Activated CD4-positive, alpha-beta memory T cell treated with anti-CD3 and anti-CD28 coated beads for 36 hours (primary cell): ENCODE measurements at regions of chr6 and their contacts with region 1.

Region 1: DNA sequence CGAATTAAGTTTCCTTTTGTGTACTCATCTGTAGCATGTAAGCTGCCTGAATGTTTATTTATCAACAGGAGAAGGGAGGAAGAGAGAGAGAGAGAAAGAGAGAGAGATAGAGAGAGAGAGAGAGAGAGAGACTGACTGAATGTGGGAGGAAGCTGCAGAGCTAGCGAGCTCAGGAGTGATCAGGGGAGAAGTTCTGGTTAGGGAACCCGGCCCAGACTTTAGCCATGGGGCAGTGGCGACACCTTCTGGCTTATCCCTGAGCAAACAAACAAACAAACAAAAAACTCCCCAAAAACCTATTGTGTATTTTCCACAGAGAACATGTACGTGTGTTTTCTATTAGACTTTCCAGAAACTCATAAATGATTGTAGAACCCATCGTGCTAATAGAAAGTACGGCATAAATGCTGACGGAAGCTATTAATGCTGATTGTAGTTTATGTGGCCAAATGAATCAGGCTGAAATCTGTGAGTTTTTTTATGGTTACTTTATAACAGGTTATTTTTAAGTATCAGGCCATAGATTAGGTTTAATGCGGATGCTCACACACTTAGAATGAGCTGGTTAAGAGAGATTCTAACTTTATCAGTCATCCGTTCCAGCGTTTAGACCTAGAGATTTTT is 92.8 kb downstream of the CLIC5 start:
- DNase-seq: peak; percentile 83
- H3K4me3 Mint-ChIP-seq: peak overlapping the region; percentile 67
- H3K27ac Mint-ChIP-seq: peak overlapping the region; percentile 97
- H3K4me1 Mint-ChIP-seq: peaks cover 52% of the 10 kb centered on the region
- H3K27me3 Mint-ChIP-seq: no peaks in the 10 kb centered on the region

Region 2: DNA sequence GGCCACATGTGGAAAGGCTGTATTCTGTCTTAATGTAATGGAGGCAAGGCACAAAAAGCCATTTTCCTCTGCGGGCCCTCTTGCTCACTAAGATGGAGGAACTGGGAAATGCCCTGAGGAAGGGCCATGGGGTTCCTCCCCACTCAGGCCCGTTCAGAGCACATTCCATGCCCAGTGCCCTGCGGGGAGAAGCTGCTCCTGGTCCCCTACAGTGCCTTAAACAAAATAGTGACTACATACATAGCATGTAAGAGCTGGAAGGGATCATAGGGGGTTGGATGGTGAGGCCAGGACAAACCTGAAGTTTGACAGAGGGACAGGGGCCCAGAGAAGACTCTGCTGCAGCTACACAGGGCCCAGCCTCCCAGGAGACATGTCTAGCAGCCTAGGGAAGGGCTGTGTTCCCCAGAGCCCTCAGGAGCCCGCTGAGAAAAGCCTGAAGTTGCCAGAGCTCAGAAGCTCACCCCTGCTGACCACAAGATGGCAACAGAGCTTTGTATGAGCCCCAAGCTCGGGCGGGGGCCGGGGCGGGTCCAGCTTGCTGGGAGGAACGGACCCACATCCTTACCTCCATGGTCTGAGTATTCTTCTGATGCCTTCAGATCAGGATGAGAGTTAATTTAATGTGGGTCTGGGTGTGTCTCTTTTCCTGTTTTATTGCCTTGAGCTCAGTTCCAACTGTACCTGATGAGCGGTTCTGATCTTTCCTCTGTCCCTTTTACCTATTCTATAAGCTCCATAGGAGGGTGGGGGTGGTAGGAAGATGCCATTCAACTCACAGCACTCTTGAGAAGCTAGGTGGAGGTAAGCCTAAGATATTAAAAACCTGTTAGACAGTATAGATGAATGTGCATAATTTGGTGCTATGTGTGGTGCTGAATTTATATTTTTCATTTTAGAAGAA is 1292.5 kb before region 1 on chr6:
- CTCF ChIA-PET with region 1: interaction called, 35 read pairs
- POLR2A ChIA-PET with region 1: interaction called, 4 read pairs
- intact Hi-C with region 1: no loop called
- DNase-seq: peak; percentile 66
- H3K4me3 Mint-ChIP-seq: no peak overlapping the region
- H3K27ac Mint-ChIP-seq: no peak overlapping the region
- H3K4me1 Mint-ChIP-seq: peaks cover 15% of the 10 kb centered on the region
- H3K27me3 Mint-ChIP-seq: no peaks in the 10 kb centered on the region

Region 3: GRCh38 chr6:45377554-45378333 is 545.1 kb before region 1 on chr6 and contains the start of gene SUPT3H:
- CTCF ChIA-PET with region 1: interaction called, 8 read pairs
- POLR2A ChIA-PET with region 1: interaction called, 8 read pairs
- intact Hi-C with region 1: loop called (anchors 1 kb)
- DNase-seq: peak; percentile 96
- H3K4me3 Mint-ChIP-seq: peak within 1 kb of the TSS; percentile 94
- H3K27ac Mint-ChIP-seq: peak within 1 kb of the TSS; percentile 97
- H3K4me1 Mint-ChIP-seq: peaks cover 27% of the 10 kb centered on the region
- H3K27me3 Mint-ChIP-seq: no peaks in the 10 kb centered on the region
- total RNA-seq, gene SUPT3H: 17.4 to 18.2 TPM

Region 4: DNA sequence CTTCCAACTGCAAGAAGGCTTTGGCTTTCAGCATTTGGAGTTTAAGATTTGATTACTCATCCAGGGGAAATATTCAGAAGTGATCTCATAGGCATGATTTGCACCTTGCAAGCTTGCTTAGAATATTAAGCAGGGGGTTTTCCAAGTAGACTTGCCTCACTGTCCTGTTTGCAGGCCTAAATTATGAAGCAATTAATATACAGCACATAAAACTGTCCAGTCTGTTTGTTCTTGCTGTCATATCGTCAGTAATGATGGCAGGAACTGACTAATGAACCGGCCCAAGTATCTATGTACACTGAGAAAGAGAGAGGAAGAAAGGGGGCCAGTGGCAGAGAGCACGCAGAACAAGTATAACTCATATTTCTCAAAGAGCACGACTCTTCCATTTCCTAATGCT is 332.6 kb before region 1 on chr6:
- CTCF ChIA-PET with region 1: interaction called, 5 read pairs
- POLR2A ChIA-PET with region 1: interaction called, 4 read pairs
- intact Hi-C with region 1: loop called (anchors 2 kb)
- DNase-seq: no peak
- H3K4me3 Mint-ChIP-seq: no peak overlapping the region
- H3K27ac Mint-ChIP-seq: peak overlapping the region; percentile 53
- H3K4me1 Mint-ChIP-seq: peaks cover 94% of the 10 kb centered on the region
- H3K27me3 Mint-ChIP-seq: no peaks in the 10 kb centered on the region

Region 5: GRCh38 chr6:45791211-45792168 is 131.3 kb before region 1 on chr6:
- CTCF ChIA-PET with region 1: interaction called, 13 read pairs
- POLR2A ChIA-PET with region 1: no interaction called
- intact Hi-C with region 1: loop called (anchors 1 kb)
- DNase-seq: no peak
- H3K4me3 Mint-ChIP-seq: no peak overlapping the region
- H3K27ac Mint-ChIP-seq: peak overlapping the region; percentile 76
- H3K4me1 Mint-ChIP-seq: peaks cover 26% of the 10 kb centered on the region
- H3K27me3 Mint-ChIP-seq: peaks cover 2% of the 10 kb centered on the region

Region 6: GRCh38 chr6:46011241-46012085 is 88.6 kb after region 1 on chr6:
- CTCF ChIA-PET with region 1: interaction called, 3 read pairs
- POLR2A ChIA-PET with region 1: interaction called, 5 read pairs
- intact Hi-C with region 1: loop called (anchors 1 kb)
- DNase-seq: peak; percentile 80
- H3K4me3 Mint-ChIP-seq: peak overlapping the region; percentile 39
- H3K27ac Mint-ChIP-seq: peak overlapping the region; percentile 77
- H3K4me1 Mint-ChIP-seq: peaks cover 58% of the 10 kb centered on the region
- H3K27me3 Mint-ChIP-seq: peaks cover 1% of the 10 kb centered on the region

Region 7: GRCh38 chr6:46032110-46032998 is 109.5 kb after region 1 on chr6:
- CTCF ChIA-PET with region 1: no interaction called
- POLR2A ChIA-PET with region 1: no interaction called
- intact Hi-C with region 1: no loop called
- DNase-seq: no peak
- H3K4me3 Mint-ChIP-seq: no peak overlapping the region
- H3K27ac Mint-ChIP-seq: no peak overlapping the region
- H3K4me1 Mint-ChIP-seq: no peaks in the 10 kb centered on the region
- H3K27me3 Mint-ChIP-seq: peaks cover 1% of the 10 kb centered on the region